CD8-positive, alpha-beta T cell (primary cell): ENCODE measurements at regions of chr3 and their contacts with region 1.

Region 1: GRCh38 chr3:68876112-68876713 is 56.1 kb downstream of the TAFA4 start:
- DNase-seq: peak in 4 of 9 experiments; percentile 18 to 69 (median 45)
- ATAC-seq: peak; percentile 61
- H3K4me3 ChIP-seq: no peak overlapping the region
- H3K4me3 Mint-ChIP-seq: no peak overlapping the region
- H3K27ac ChIP-seq: no peak overlapping the region
- H3K27ac Mint-ChIP-seq: no peak overlapping the region
- H3K4me1 ChIP-seq: no peaks in the 10 kb centered on the region
- H3K4me1 Mint-ChIP-seq: no peaks in the 10 kb centered on the region
- H3K27me3 ChIP-seq: peaks cover 0 to 3% of the 10 kb centered on the region in 2 experiments
- H3K27me3 Mint-ChIP-seq: peaks cover 14% of the 10 kb centered on the region
- CTCF ChIP-seq: peak; percentile 87

Region 2: DNA sequence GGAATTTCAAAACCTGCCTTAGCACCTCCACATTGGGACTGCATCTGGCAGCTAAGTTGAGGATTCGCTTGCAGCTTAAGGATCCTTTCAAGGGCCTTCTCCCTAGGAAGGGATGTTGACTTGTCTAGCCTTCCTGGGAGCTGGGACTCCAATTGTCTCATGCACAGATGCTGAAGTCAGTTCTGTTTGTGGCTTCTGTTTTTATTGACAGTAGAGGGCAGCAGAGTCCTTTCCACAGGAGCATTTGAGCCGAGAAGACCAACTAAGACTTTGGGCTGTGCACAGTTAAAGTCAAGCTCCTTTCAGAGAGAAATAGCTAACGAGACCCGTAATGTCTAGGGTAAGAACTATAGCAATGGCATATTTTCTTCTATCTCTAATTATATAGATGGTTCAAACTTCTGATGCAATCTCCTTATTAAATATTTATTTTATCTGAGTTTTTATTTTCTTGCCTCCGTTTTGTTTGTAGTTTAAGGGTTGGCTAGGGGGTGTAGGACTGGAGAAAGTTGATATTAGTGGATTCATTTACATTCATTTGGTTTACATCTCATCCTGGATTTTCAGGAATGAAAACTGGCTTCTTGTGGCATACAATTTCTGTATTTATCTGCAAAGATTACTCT is 1937.8 kb before region 1 on chr3:
- CTCF ChIA-PET with region 1: interaction called, 10 read pairs
- POLR2A ChIA-PET with region 1: no interaction called
- intact Hi-C with region 1: loop called (anchors 1 kb)
- DNase-seq: peak in 6 of 9 experiments; percentile 1 to 59 (median 15)
- ATAC-seq: no peak
- H3K4me3 ChIP-seq: no peak overlapping the region
- H3K4me3 Mint-ChIP-seq: no peak overlapping the region
- H3K27ac ChIP-seq: no peak overlapping the region
- H3K27ac Mint-ChIP-seq: no peak overlapping the region
- H3K4me1 ChIP-seq: no peaks in the 10 kb centered on the region
- H3K4me1 Mint-ChIP-seq: no peaks in the 10 kb centered on the region
- H3K27me3 ChIP-seq: no peaks in the 10 kb centered on the region
- H3K27me3 Mint-ChIP-seq: peaks cover 29% of the 10 kb centered on the region
- CTCF ChIP-seq: peak; percentile 34

Region 3: GRCh38 chr3:67384760-67385397 is 1491.3 kb before region 1 on chr3:
- CTCF ChIA-PET with region 1: interaction called, 7 read pairs
- POLR2A ChIA-PET with region 1: no interaction called
- intact Hi-C with region 1: loop called in 1 of 2 experiments (anchors 1 kb)
- DNase-seq: peak in 7 of 9 experiments; percentile 4 to 54 (median 38)
- ATAC-seq: no peak
- H3K4me3 ChIP-seq: no peak overlapping the region
- H3K4me3 Mint-ChIP-seq: no peak overlapping the region
- H3K27ac ChIP-seq: no peak overlapping the region
- H3K27ac Mint-ChIP-seq: peak overlapping the region; percentile 18
- H3K4me1 ChIP-seq: no peaks in the 10 kb centered on the region
- H3K4me1 Mint-ChIP-seq: peaks cover 12% of the 10 kb centered on the region
- H3K27me3 ChIP-seq: no peaks in the 10 kb centered on the region
- H3K27me3 Mint-ChIP-seq: no peaks in the 10 kb centered on the region
- CTCF ChIP-seq: peak; percentile 45

Region 4: DNA sequence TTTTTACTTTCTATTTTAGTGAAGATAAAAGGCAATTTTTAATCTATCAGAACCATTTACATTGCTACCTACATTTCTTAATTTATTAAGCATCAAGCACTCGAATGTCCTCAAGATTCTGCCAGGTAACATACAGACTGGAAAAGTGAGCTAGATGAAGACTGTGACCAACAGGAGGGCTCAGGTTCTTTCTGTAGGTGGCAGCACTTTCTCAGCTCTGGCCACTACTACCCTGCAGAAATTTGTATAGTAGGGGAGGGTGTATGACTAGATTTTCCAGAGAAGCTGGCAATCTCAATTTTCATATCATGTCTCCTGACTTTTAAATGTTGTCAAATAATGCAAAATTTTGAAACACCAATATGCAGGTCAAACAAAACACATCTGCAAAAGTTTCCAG is 1056.8 kb before region 1 on chr3:
- CTCF ChIA-PET with region 1: interaction called, 4 read pairs
- POLR2A ChIA-PET with region 1: no interaction called
- intact Hi-C with region 1: loop called in 1 of 2 experiments (anchors 1 kb)
- DNase-seq: peak in 2 of 9 experiments; percentile 17 to 36
- ATAC-seq: no peak
- H3K4me3 ChIP-seq: no peak overlapping the region
- H3K4me3 Mint-ChIP-seq: no peak overlapping the region
- H3K27ac ChIP-seq: no peak overlapping the region
- H3K27ac Mint-ChIP-seq: no peak overlapping the region
- H3K4me1 ChIP-seq: no peaks in the 10 kb centered on the region
- H3K4me1 Mint-ChIP-seq: no peaks in the 10 kb centered on the region
- H3K27me3 ChIP-seq: no peaks in the 10 kb centered on the region
- H3K27me3 Mint-ChIP-seq: peaks cover 2% of the 10 kb centered on the region
- CTCF ChIP-seq: no peak

Region 5: GRCh38 chr3:67901681-67902080 is 974.5 kb before region 1 on chr3:
- CTCF ChIA-PET with region 1: no interaction called
- POLR2A ChIA-PET with region 1: no interaction called
- intact Hi-C with region 1: loop called (anchors 5 kb)
- DNase-seq: peak in 3 of 9 experiments; percentile 7 to 45 (median 31)
- ATAC-seq: no peak
- H3K4me3 ChIP-seq: no peak overlapping the region
- H3K4me3 Mint-ChIP-seq: no peak overlapping the region
- H3K27ac ChIP-seq: no peak overlapping the region
- H3K27ac Mint-ChIP-seq: no peak overlapping the region
- H3K4me1 ChIP-seq: peaks cover 10% of the 10 kb centered on the region
- H3K4me1 Mint-ChIP-seq: peaks cover 14% of the 10 kb centered on the region
- H3K27me3 ChIP-seq: no peaks in the 10 kb centered on the region
- H3K27me3 Mint-ChIP-seq: no peaks in the 10 kb centered on the region
- CTCF ChIP-seq: peak; percentile 42

Region 6: DNA sequence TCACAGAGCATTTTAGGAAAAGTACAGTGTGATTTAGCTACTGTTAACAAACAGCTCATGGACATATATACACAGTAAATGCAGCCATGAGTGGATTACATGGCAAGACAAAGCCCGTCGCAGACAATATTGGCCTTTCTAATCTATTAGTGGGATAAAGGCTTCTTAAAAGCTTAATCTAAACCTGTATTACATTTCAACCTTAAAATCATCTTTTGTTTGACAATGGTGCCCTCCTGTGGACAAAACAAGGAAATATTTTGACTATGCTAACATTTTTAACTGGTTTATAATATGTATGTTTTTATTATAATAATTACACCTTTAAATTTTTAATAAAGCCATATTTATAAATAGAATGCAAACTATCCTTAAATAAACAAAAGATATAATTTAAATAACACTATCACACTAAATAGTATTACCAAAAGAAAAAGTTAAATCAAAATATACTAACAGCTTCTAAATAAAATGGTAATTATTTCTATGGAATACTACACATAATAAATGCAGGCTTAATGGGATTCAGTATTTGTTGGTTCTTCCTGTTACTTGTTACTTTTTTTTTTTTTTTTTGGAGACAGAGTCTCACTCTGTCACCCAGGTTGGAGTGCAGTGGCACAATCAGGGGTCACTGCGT is 17.5 kb after region 1 on chr3:
- CTCF ChIA-PET with region 1: interaction called, 27 read pairs
- POLR2A ChIA-PET with region 1: no interaction called
- intact Hi-C with region 1: no loop called
- DNase-seq: peak in 3 of 9 experiments; percentile 16 to 56 (median 47)
- ATAC-seq: no peak
- H3K4me3 ChIP-seq: no peak overlapping the region
- H3K4me3 Mint-ChIP-seq: no peak overlapping the region
- H3K27ac ChIP-seq: no peak overlapping the region
- H3K27ac Mint-ChIP-seq: no peak overlapping the region
- H3K4me1 ChIP-seq: no peaks in the 10 kb centered on the region
- H3K4me1 Mint-ChIP-seq: no peaks in the 10 kb centered on the region
- H3K27me3 ChIP-seq: no peaks in the 10 kb centered on the region
- H3K27me3 Mint-ChIP-seq: no peaks in the 10 kb centered on the region
- CTCF ChIP-seq: peak; percentile 66